ENCODE measurements at regions of chr10 and their contacts with region 1.

Region 1: GRCh38 chr10:133520155-133520738 is 6.9 kb upstream of the CYP2E1 start:
- DNase-seq: peak; percentile 88
- H3K4me3 ChIP-seq: peak overlapping the region; percentile 29
- H3K27ac ChIP-seq: no peak overlapping the region
- H3K4me1 ChIP-seq: no peaks in the 10 kb centered on the region
- H3K27me3 ChIP-seq: no peaks in the 10 kb centered on the region
- CTCF ChIP-seq: peak; percentile 92

Region 2: DNA sequence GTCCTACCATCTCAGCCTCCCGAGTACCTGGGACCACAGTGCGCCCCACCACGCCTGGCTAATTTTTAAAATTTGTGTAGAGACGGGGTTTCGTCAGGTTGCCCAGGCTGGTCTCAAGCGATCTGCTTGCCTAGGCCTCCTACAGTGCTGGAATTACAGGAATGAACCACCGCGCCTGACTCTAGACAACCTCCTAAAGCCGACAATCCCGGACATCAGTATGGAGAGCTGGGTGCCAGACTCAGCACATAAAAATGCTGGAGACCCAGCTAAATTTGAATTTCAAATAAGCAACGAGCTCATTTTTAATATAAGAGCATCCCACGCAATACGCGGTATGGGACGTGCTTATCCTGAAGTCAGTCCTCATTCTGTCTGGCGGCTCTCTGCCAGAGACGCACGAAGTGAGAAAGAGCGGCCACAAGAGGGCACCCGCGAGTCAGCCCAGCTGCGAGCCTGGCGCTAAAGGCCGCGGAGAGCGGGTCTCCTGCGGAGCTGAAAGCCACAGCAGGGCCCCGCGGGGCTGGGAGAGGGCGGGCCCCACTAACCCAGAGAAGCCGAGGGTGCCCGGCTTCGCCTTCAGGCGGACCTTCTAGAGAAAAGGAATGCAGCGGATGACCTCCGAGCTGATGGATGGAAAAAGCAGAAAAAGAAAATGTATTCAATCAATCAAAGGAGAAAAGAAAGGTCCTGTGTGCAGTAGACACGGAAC is 190.6 kb before region 1 on chr10:
- intact Hi-C with region 1: loop called (anchors 10 kb)
- DNase-seq: peak; percentile 86
- H3K4me3 ChIP-seq: peak overlapping the region; percentile 39
- H3K27ac ChIP-seq: no peak overlapping the region
- H3K4me1 ChIP-seq: peaks cover 13% of the 10 kb centered on the region
- H3K27me3 ChIP-seq: peaks cover 51% of the 10 kb centered on the region
- CTCF ChIP-seq: peak; percentile 94

Region 3: DNA sequence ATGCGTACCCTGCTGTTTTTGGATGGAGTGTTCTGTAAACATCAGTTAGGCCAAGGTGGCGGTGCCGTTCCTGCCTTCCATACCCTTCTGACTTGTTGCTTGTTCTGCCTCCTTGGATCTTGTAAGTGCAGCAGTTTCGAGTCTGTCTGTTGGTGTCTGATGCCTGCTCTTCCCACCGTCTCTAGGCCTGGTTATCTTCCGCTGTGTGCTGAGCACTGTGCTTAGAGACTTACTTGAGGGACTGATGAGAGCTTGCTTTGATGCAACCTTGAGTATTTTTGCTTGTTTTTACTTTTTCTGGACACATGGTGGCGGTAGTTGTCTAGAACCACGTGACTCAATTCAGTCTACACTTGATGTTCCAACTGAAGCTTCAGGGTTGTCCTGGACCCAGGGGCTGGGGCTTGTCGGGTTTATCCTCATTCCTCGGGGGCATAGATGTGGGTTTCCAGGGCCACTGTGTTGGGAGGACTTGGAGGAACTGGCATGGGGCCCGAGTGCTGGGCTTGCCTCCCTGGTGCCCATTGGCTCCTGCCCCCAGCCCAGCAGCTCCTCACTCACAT is 81.5 kb before region 1 on chr10:
- intact Hi-C with region 1: loop called (anchors 10 kb)
- DNase-seq: no peak
- H3K4me3 ChIP-seq: no peak overlapping the region
- H3K27ac ChIP-seq: no peak overlapping the region
- H3K4me1 ChIP-seq: no peaks in the 10 kb centered on the region
- H3K27me3 ChIP-seq: no peaks in the 10 kb centered on the region
- CTCF ChIP-seq: peak; percentile 27

Region 4: GRCh38 chr10:133590226-133590969 is 70.2 kb after region 1 on chr10:
- intact Hi-C with region 1: no loop called
- DNase-seq: no peak
- H3K4me3 ChIP-seq: no peak overlapping the region
- H3K27ac ChIP-seq: no peak overlapping the region
- H3K4me1 ChIP-seq: no peaks in the 10 kb centered on the region
- H3K27me3 ChIP-seq: no peaks in the 10 kb centered on the region
- CTCF ChIP-seq: no peak